Head of caudate nucleus (tissue), 42 donors: ENCODE measurements at regions of chr2 and their contacts with region 1.

Region 1: GRCh38 chr2:165401285-165401852 is 68.1 kb upstream of the CSRNP3 start:
- DNase-seq: peak in 16 of 42 donors; percentile 13 to 70 (median 38)

Region 2: DNA sequence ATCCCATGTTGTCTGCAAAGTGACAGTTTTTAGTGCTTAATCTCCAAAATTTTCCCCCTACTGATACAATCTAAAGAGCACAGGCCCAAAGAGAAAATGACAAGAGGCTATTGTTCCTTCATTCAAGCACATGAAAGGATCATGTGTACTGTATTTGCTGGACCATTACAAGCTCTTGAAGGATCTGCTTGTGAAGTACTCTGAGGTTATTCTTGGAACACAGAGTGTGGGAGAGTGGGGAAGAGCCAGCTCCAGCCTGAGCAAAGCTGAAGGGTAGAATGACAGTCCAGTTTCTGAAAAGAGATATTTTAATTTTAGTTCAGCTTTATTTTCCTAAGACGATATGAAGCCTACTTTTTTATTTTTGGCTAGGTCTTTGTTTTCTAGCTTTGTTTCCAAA is 280.5 kb after region 1 on chr2:
- intact Hi-C with region 1: no loop called
- DNase-seq: peak in 7 of 42 donors; percentile 23 to 63 (median 44)

Region 3: DNA sequence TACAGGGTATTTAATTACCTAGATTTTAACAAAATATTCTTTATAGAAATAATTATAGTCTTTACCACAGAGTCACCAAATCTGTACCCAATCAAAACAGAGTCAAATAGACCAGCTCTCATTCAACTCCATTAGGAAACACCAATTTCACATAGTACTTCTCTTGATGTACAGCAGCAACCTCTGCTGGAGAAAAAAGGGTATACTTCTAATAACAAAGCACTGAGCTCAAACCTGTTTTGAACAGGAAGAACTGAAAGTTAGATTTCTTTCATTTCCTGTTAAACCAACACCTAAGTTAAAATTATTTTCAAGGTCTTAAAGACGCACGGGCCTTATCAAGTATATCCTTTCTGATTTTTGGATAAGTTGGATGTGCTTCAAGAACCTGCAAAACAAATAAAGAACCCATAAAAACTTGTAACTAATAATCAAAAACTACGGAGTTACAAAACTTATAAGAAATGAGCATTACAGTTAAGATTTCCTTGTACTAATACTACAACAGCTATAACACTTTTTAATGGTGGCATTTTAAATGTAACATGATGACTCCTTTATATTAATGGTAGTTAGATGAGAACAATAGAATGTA is 473.2 kb after region 1 on chr2:
- intact Hi-C with region 1: loop called (anchors 5 kb)
- DNase-seq: peak in 4 of 42 donors; percentile 28 to 53 (median 30)